Dorsolateral prefrontal cortex (tissue), 120 donors: ENCODE measurements at regions of chr7 and their contacts with region 1.

Region 1: DNA sequence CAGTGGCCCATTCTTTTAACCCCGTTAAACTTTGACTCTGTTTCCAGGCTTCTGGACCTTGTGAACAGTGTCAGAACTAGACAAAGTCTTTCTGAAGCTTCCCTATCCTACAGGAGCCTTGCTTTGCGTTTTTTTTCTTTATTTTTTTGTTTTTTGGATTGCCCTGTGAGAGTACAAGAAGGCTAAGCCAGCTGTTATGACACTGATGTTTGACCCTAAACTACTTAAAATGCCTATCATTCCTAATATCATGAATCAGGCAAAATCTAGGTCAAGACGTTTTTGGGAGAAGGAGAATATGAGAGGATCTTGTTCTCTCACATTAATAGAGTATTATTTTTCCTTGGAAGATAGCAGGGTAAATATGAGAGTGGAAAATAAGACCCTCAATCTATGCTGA is 79.8 kb downstream of the EPDR1 start:
- DNase-seq: no peak
- H3K4me3 ChIP-seq: no peak overlapping the region
- H3K27ac ChIP-seq: peak overlapping the region in 1 of 59 donors; percentile 1
- H3K27me3 ChIP-seq: no peaks in the 10 kb centered on the region
- CTCF ChIP-seq: no peak

Region 2: GRCh38 chr7:38052786-38053185 is 52.5 kb after region 1 on chr7:
- intact Hi-C with region 1: no loop called
- DNase-seq: no peak
- H3K4me3 ChIP-seq: no peak overlapping the region
- H3K27ac ChIP-seq: no peak overlapping the region
- H3K27me3 ChIP-seq: no peaks in the 10 kb centered on the region
- CTCF ChIP-seq: no peak

Region 3: DNA sequence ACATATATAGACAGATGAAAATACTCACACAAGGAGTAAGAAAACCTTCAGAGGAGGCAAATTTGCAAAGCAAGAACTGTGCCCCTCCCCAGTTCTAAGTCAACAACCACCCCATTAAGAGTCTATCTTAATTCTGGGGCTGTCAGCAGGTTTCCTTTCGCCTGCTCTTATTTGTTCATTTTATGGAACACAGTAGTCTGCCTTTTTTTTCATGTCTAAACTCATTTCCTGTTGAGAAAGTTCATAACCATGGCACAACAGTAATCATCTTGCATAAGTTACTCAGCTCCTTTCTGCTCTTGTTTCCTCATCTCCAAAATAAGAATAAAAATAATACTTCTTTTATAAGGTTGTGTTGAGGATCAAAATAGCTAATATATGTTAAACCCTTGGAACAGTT is 656.7 kb after region 1 on chr7:
- intact Hi-C with region 1: loop called in 1 of 2 experiments (anchors 10 kb)
- DNase-seq: no peak
- H3K4me3 ChIP-seq: no peak overlapping the region
- H3K27ac ChIP-seq: no peak overlapping the region
- H3K27me3 ChIP-seq: peaks cover 0 to 10% (median 0%) of the 10 kb centered on the region in 45 donors
- CTCF ChIP-seq: no peak